Heart right ventricle (tissue), 16 donors: ENCODE measurements at regions of chr10 and their contacts with region 1.

Region 1: DNA sequence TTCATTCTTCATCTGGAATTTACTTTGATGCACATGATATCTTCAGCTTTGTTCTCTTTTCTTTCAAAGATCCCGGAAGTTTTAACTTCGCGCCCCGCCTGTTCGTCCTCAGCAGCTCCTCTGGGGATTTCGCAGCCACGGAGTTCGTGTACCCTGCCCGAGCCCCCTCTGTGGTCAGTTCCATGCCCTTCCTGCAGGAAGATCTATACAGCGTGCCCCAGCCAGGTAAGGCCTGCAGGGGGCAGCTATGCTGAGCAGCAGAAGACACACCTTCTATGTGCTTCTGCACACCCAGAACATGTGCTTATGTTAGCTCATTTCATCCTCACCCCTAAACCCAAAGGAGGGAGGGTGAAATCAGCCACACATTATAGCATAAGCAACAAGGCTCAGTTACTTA is 79.7 kb upstream of the LYZL2 start:
- DNase-seq: no peak
- ATAC-seq: peak in 1 of 8 donors; percentile 18
- H3K4me3 ChIP-seq: no peak overlapping the region
- H3K27ac ChIP-seq: no peak overlapping the region
- H3K4me1 ChIP-seq: peaks cover 0 to 9% (median 0%) of the 10 kb centered on the region in 9 donors
- H3K27me3 ChIP-seq: peaks cover 0 to 5% (median 0%) of the 10 kb centered on the region in 7 donors
- CTCF ChIP-seq: no peak

Region 2: GRCh38 chr10:30687698-30688219 is 21.5 kb before region 1 on chr10:
- intact Hi-C with region 1: loop called in 1 of 10 experiments (anchors 2 kb)
- DNase-seq: peak; percentile 58 to 79
- ATAC-seq: peak; percentile 50 to 88 (median 69)
- H3K4me3 ChIP-seq: no peak overlapping the region
- H3K27ac ChIP-seq: no peak overlapping the region
- H3K4me1 ChIP-seq: peaks cover 0 to 4% (median 0%) of the 10 kb centered on the region in 9 donors
- H3K27me3 ChIP-seq: peaks cover 0 to 39% (median 17%) of the 10 kb centered on the region in 7 donors
- CTCF ChIP-seq: peak; percentile 72 to 91 (median 84)

Region 3: DNA sequence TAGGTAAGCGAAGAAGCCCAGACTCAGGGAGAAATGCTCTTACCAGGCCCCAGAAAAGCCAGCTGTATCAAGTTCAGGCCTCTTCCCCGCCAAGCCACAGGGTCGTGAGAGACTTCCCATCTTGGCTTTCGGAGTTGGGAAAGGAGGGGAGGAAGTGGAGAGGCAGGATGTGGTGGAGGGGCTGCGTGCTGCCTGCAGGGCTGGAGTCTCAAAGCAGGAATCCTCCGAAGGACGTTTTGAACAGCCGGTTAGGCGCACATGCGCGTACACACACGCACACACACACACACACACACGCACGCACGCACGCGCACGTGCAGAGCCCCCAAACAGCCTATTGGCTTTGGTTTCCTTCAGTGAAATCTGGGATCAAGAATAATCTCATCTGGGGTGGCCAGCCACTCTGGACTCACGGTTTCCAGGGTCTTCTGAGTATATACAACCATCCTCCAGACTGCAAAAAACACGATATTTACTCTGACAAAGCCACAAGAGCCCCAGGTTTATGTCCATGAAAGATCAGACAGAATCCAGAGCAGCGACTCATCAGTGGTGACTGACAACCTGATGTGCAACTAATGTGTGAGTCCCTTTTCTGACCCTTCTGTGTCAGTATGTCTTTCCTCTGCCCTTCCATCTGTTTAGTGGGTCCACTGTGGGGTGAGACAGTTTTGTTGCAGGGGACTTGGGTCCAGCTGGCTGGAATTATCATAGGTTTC is 437.4 kb after region 1 on chr10:
- intact Hi-C with region 1: no loop called
- DNase-seq: peak; percentile 60 to 84
- ATAC-seq: peak; percentile 72 to 94 (median 87)
- H3K4me3 ChIP-seq: peak overlapping the region in 3 of 10 donors; percentile 13 to 22 (median 21)
- H3K27ac ChIP-seq: peak overlapping the region in 9 of 10 donors; percentile 46 to 86 (median 63)
- H3K4me1 ChIP-seq: peaks cover 6 to 45% (median 23%) of the 10 kb centered on the region in 9 donors
- H3K27me3 ChIP-seq: no peaks in the 10 kb centered on the region
- CTCF ChIP-seq: no peak